HepG2 (cell line): ENCODE measurements at regions of chr1 and their contacts with region 1.

Region 1: DNA sequence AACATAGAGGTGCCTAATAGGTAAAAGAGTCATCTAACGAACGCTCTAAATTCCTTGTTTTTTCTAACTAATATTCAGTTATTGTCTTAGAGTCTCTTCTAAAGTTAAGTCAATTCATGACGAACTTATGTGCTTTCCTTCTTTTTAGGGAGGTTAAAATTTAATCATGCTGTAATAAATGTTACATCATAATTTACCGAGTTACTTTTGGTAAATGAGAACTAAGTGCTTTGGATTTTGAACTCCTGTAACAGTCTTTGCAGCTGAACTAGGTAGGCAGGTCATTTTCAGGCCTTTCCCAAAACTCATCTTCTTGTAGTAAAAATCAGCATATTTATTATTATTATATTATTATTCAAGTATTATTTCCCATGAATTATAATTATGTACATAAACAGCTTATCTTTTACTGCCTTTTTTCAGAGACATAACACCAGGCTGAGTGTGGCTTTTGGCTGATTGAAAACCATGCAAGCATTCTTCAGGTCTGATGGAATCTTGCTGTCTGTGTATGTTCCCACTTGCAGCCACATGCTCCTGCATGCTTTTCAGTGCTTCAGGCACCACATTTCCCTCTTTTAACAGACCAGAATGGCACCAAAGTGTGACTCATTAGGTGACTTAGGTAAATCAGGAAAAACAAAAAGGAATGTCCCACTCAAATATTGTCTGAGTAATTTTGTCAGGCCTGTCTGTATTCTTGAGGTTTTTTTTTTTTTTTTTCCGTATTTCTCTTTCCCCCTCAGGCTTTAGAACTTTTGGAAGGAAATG is 81.0 kb upstream of the CD55 start:
- DNase-seq: peak; percentile 74
- ATAC-seq: peak; percentile 58
- H3K4me3 ChIP-seq: no peak overlapping the region; a peak in 3 of 6 replicates
- H3K27ac ChIP-seq: peak overlapping the region; percentile 87
- H3K4me1 ChIP-seq: peaks cover 46% of the 10 kb centered on the region
- H3K27me3 ChIP-seq: no peaks in the 10 kb centered on the region
- CTCF ChIP-seq: no peak
- EP300 ChIP-seq: no peak
- POLR2A ChIP-seq: no peak
- RAD21 ChIP-seq: no peak

Region 2: DNA sequence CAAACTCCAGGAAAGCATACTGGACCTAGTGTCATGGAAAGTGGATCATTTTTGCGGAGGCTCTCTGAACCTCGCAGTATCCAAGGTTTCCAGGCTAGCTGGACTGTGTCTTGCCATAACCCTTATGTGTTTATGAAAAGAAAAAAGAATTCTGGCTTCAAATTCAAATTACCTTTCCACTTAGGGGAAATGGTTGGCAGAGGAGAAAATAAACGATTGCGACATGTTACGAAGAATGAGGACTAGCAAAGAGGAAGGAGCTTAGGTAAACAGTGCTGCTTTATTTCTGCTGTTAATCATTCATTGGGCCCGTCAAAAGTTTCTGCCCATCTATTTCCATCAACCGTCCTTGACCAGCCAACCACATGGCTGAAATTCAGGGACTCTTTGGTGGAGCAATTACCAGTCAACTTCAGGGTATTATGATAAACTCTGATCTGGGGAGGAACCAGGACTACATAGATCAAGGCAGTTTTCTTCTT is 136.6 kb before region 1 on chr1 and contains the start of gene C4BPA:
- CTCF ChIA-PET with region 1: no interaction called
- POLR2A ChIA-PET with region 1: no interaction called
- in situ Hi-C with region 1: no loop called
- intact Hi-C with region 1: loop called (anchors 5 kb)
- DNase-seq: peak; percentile 90
- ATAC-seq: peak; percentile 97
- H3K4me3 ChIP-seq: no peak within 1 kb of the TSS
- H3K27ac ChIP-seq: peak within 1 kb of the TSS; percentile 52
- H3K4me1 ChIP-seq: peaks cover 36% of the 10 kb centered on the region
- H3K27me3 ChIP-seq: no peaks in the 10 kb centered on the region
- CTCF ChIP-seq: no peak
- EP300 ChIP-seq: peak in 1 of 2 experiments; percentile 51; a peak in 2 of 4 replicates
- POLR2A ChIP-seq: no peak
- RAD21 ChIP-seq: no peak
- total RNA-seq, gene C4BPA: 18.7 and 32.1 TPM in 2 replicates

Region 3: GRCh38 chr1:207205614-207206061 is 34.9 kb before region 1 on chr1:
- CTCF ChIA-PET with region 1: no interaction called
- POLR2A ChIA-PET with region 1: interaction called, 4 read pairs
- in situ Hi-C with region 1: no loop called
- intact Hi-C with region 1: loop called (anchors 2 kb)
- DNase-seq: no peak
- ATAC-seq: no peak
- H3K4me3 ChIP-seq: no peak overlapping the region
- H3K27ac ChIP-seq: peak overlapping the region; percentile 46
- H3K4me1 ChIP-seq: peaks cover 15% of the 10 kb centered on the region
- H3K27me3 ChIP-seq: no peaks in the 10 kb centered on the region
- CTCF ChIP-seq: no peak
- EP300 ChIP-seq: no peak
- POLR2A ChIP-seq: no peak
- RAD21 ChIP-seq: no peak

Region 4: DNA sequence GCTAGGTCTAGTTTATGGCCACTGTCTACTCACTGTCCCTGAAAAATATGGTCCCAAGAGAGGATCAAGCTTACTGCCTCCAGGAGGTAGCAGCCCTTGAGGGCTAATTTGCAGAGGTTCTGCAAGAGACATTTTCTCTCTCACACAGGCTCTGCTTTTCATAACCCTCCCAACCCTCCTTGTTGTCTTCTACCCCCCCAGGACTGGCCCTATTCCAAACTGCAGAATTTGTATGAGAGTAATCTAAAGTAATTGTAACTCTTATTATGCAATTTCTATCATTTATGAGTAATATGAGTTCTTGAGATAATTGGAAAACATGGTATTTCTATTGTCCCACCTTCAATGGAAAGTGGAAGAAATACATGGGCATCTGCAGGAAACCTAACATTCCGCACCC is 10.6 kb after region 1 on chr1:
- CTCF ChIA-PET with region 1: no interaction called
- POLR2A ChIA-PET with region 1: no interaction called
- in situ Hi-C with region 1: no loop called
- intact Hi-C with region 1: no loop called
- DNase-seq: no peak
- ATAC-seq: no peak
- H3K4me3 ChIP-seq: no peak overlapping the region
- H3K27ac ChIP-seq: no peak overlapping the region
- H3K4me1 ChIP-seq: no peaks in the 10 kb centered on the region
- H3K27me3 ChIP-seq: no peaks in the 10 kb centered on the region
- CTCF ChIP-seq: no peak
- EP300 ChIP-seq: no peak
- POLR2A ChIP-seq: no peak
- RAD21 ChIP-seq: no peak